ENCODE measurements at regions of chr6 and their contacts with region 1.

Region 1: DNA sequence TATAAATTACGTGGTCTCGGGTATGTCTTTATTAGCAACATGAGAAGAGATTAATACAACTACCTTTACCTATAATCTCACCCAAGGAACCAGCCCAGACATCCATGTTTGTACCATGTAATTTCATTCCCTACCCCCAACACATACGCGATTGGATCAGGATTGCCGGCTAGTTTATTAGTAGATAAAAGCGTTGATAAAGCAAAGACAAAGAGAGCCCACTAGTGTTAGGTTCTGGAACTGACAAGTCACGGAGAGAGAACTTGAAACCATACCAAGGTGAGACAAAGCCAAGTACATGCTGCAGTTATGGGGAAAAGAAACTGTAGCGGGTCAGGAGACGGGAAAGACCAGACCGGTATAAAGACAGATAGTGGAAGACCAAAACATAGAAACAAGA is 37.4 kb upstream of the FAM135A start:
- DNase-seq: peak in 1 of 2 experiments; percentile 47
- H3K4me3 ChIP-seq: no peak overlapping the region
- H3K27ac ChIP-seq: no peak overlapping the region
- H3K4me1 ChIP-seq: no peaks in the 10 kb centered on the region; a peak in 1 of 7 replicates
- H3K27me3 ChIP-seq: no peaks in the 10 kb centered on the region
- CTCF ChIP-seq: peak in 2 of 3 experiments; percentile 40 to 67; a peak in 3 of 4 replicates
- EP300 ChIP-seq: no peak
- POLR2A ChIP-seq: no peak
- RAD21 ChIP-seq: peak; percentile 56 to 62

Region 2: DNA sequence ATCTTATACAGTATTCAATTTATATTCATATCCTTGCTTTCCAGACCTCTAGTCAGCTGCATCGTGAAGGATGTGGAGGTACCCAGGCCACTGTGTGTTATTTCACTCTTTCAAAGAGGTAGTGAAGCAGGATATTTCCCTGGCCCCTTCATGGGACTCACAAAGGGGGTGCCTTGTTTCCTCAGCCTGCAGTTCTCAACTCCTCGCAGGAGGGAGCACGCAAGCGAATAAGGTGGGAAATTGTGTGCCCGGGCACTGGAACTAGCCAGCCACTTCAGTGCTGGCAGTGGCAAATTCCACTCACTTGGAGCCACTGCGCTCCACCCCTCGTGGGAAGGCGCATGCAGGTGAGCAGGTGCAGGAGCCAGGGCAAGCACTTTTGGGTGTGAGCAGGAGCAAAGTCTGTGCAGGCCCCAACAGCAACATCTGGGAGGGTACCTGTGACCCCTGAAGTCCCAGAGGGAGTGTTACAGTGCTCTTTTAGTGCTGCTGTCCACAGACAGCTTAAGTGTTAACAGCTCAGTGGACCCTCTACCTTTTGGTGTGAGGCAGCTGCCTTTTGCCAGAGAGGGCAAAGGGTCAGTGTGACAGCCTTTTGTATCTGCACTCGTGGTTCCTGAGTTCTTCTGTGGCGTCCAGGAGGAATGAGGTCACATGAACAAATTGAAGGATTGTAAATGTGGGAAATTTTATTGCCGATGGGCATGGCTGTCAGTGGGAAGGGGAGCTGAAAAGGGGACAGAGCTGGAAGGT is 12.0 kb before region 1 on chr6:
- CTCF ChIA-PET with region 1: interaction called, 19 read pairs
- POLR2A ChIA-PET with region 1: no interaction called
- DNase-seq: no peak
- H3K4me3 ChIP-seq: no peak overlapping the region
- H3K27ac ChIP-seq: no peak overlapping the region
- H3K4me1 ChIP-seq: no peaks in the 10 kb centered on the region
- H3K27me3 ChIP-seq: no peaks in the 10 kb centered on the region
- CTCF ChIP-seq: no peak
- EP300 ChIP-seq: no peak
- POLR2A ChIP-seq: no peak
- RAD21 ChIP-seq: no peak

Region 3: DNA sequence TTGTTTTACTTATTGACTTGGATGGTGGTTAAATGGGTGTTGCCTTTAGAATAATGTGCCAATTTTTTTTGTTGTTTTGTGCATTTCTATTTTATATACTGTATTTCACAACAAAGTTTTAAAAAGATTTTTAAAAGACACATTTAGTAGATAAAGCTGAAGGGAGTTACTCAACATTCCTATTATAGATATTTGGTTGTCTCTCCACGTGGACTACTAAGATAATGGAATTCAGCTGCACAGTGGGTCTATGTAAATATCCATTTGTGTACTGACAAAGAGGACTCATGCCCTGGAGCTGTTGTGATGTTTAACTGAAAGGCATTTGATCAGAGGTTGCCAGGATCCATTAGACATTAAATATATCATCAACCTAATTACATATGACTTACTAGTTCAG is 14.2 kb after region 1 on chr6:
- CTCF ChIA-PET with region 1: interaction called, 24 read pairs
- POLR2A ChIA-PET with region 1: no interaction called
- DNase-seq: no peak
- H3K4me3 ChIP-seq: no peak overlapping the region
- H3K27ac ChIP-seq: no peak overlapping the region
- H3K4me1 ChIP-seq: no peaks in the 10 kb centered on the region
- H3K27me3 ChIP-seq: no peaks in the 10 kb centered on the region
- CTCF ChIP-seq: no peak
- EP300 ChIP-seq: no peak
- POLR2A ChIP-seq: no peak
- RAD21 ChIP-seq: no peak

Region 4: DNA sequence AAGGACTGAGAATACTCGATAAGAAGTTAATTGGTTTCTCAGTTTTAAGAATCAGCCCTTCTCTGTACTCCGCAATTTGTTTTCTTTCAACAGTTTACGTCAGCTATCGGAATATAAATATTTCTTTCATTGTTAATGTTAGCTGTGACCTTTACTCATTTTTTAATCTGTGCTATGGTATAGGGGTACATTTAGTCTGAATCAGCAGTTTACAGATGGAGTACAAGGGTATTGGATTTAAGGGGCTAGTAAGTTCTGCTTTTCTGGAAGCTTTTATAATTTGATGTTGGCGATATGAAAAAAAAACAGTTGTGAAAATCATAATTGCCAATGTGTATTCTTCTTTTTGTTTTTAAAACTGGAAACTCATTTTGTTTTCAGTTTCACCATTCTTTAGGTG is 60.4 kb after region 1 on chr6:
- CTCF ChIA-PET with region 1: no interaction called
- POLR2A ChIA-PET with region 1: no interaction called
- DNase-seq: no peak
- H3K4me3 ChIP-seq: no peak overlapping the region
- H3K27ac ChIP-seq: no peak overlapping the region
- H3K4me1 ChIP-seq: no peaks in the 10 kb centered on the region
- H3K27me3 ChIP-seq: no peaks in the 10 kb centered on the region
- CTCF ChIP-seq: no peak
- EP300 ChIP-seq: no peak
- POLR2A ChIP-seq: no peak
- RAD21 ChIP-seq: no peak